CD4-positive, alpha-beta memory T cell (primary cell): ENCODE measurements at regions of chr3 and their contacts with region 1.

Region 1: GRCh38 chr3:99023590-99024192 is 122.2 kb upstream of the DCBLD2 start:
- DNase-seq: peak in 2 of 5 donors; percentile 3
- H3K4me3 ChIP-seq: no peak overlapping the region
- H3K4me3 Mint-ChIP-seq: no peak overlapping the region
- H3K27ac ChIP-seq: no peak overlapping the region
- H3K27ac Mint-ChIP-seq: no peak overlapping the region
- H3K4me1 ChIP-seq: no peaks in the 10 kb centered on the region
- H3K4me1 Mint-ChIP-seq: peaks cover 0 to 1% (median 0%) of the 10 kb centered on the region in 4 donors
- H3K27me3 ChIP-seq: no peaks in the 10 kb centered on the region
- H3K27me3 Mint-ChIP-seq: peaks cover 0 to 1% of the 10 kb centered on the region in 2 donors

Region 2: GRCh38 chr3:99686955-99687612 is 663.4 kb after region 1 on chr3:
- CTCF ChIA-PET with region 1: no interaction called
- POLR2A ChIA-PET with region 1: no interaction called
- intact Hi-C with region 1: loop called (anchors 5 kb)
- DNase-seq: peak in 1 of 5 donors; percentile 7
- H3K4me3 ChIP-seq: no peak overlapping the region
- H3K4me3 Mint-ChIP-seq: no peak overlapping the region
- H3K27ac ChIP-seq: no peak overlapping the region
- H3K27ac Mint-ChIP-seq: no peak overlapping the region
- H3K4me1 ChIP-seq: no peaks in the 10 kb centered on the region
- H3K4me1 Mint-ChIP-seq: no peaks in the 10 kb centered on the region
- H3K27me3 ChIP-seq: no peaks in the 10 kb centered on the region
- H3K27me3 Mint-ChIP-seq: peaks cover 4 to 8% of the 10 kb centered on the region in 2 donors